ENCODE measurements at regions of chr17 and their contacts with region 1.

Region 1: DNA sequence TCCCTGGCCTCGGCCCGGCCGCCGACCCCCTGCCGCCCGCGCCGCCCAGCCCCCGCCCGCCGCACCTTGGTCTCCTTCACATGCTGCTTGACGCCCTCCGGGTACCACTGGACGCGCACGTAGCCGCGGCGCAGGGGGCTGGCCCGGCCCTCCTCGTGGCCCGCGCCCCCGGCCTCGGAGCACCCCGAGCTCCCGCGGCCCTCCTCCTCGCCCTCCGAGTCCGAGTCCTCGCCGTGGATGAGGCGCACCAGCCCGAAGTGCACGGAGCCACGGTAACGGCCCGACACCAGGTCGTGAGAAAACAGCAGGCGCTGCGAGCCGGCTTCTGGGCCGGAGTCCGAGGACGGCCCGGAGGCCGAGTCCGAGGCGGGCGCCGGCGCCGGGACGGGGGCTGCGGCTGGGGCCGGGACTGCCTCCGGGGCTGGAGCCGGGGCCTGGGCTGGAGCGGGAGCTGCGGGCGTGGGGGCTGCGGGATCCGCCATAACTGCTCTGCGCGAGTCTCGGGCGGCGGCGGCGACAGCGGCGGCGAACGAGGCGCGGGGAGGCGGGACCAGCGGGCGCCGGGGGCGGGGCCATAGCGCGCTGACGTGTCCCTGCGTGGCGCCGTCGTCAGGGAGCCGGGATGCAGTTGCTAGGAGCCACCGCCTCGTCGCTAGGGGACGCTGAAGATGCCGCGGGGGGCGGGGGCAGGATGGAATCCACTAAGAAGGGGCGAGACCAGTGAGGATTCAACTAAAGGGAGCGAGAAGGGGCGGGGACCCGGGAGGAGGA is at the start of gene UBE2O:
- DNase-seq: peak; percentile 81 to 99 (median 88)

Region 2: GRCh38 chr17:75878174-75878998 is 574.5 kb before region 1 on chr17 and contains the start of gene TRIM47:
- intact Hi-C with region 1: no loop called
- DNase-seq: peak in 6 of 10 donors; percentile 41 to 93 (median 81)

Region 3: DNA sequence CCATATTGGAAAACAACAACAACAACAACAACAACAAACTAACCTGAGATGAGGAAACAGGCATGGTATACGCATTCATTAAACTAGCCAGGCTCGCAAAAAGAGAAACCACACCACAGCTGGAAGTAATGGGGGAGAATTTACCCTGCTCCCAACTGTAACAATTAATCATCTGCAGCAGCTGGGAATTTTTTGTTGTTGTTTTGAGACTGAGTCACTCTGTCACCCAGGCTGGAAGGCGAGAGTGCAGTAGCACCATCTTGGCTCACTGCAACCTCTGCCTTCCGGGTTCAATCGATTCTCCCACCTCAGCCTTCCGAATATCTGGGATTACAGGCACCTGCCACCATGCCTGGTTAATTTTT is 115.5 kb before region 1 on chr17:
- intact Hi-C with region 1: no loop called
- DNase-seq: no peak

Region 4: DNA sequence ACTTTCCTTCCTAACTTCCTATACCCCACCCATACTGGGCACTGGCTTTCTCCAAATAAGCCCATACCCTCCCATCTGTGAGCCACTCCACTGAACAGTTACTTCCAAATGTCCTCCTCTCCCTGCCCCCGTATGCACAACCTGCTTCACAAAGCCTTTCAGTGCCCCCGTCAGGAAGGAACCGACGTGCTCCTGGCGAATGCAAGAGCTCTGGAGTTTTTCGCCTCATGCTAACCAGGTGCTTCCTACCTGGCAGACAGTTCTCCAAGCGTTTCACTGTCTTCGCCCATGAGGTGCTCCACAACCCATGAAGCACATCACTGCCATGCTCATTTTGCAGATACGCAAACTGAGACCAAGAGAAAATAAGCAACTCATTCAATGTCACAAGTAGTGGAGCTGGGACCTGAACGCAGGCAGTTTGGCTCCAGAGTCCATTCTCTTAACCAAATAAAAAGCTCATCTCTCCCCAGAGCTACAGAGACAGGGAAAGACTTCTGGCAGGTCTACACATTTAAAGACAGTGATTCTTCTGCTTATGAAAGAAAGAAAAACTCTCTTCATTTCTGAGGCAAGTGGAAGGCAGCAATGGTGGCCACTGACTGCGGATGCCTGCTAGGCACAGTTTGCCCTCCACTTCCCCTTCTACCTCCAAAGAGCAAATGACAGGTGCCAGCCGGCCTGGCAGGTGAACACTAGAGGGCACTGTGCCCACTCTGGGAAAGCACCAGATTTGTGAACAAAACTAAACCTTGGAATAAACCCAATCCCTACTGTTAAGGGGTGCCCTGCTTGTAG is 44.6 kb before region 1 on chr17:
- intact Hi-C with region 1: loop called (anchors 5 kb)
- DNase-seq: peak in 6 of 10 donors; percentile 32 to 92 (median 75)

Measured in posterior cingulate gyrus (tissue), 11 donors.